ENCODE measurements at regions of chr17 and their contacts with region 1.

Region 1: DNA sequence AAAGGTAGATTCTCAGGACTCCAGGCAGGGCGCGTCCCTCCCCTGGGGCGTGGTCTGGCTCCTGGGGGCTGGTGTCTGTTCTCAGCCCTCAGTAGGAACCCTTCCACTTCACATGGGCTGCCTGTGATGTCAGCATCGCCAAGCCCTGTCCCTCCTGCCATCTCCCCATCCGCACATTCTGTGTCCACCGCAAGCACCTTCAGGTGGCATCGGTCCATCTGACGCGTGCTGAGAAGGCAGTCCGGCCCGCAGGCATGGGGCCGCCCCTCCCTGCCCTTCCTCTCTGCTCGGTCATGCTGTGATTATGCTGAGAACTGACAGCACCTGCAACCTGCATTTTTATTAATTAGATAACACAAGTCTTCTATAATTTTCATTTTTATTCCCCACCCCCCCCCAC is 12.7 kb upstream of the DNAH17 start:
- DNase-seq: no peak
- ATAC-seq: no peak
- H3K4me3 ChIP-seq: no peak overlapping the region
- H3K27ac ChIP-seq: peak overlapping the region in 2 of 10 donors; percentile 92 to 93
- H3K4me1 ChIP-seq: peaks cover 3 to 54% (median 23%) of the 10 kb centered on the region in 9 donors
- H3K27me3 ChIP-seq: peaks cover 0 to 8% (median 0%) of the 10 kb centered on the region in 7 donors
- CTCF ChIP-seq: no peak

Region 2: GRCh38 chr17:78563189-78564145 is 26.4 kb before region 1 on chr17:
- intact Hi-C with region 1: loop called in 1 of 10 experiments (anchors 1 kb)
- DNase-seq: peak; percentile 64 to 83
- ATAC-seq: peak in 7 of 8 donors; percentile 62 to 93 (median 89)
- H3K4me3 ChIP-seq: no peak overlapping the region
- H3K27ac ChIP-seq: peak overlapping the region in 9 of 10 donors; percentile 44 to 89 (median 75)
- H3K4me1 ChIP-seq: peaks cover 0 to 21% (median 11%) of the 10 kb centered on the region in 9 donors
- H3K27me3 ChIP-seq: peaks cover 0 to 6% (median 0%) of the 10 kb centered on the region in 7 donors
- CTCF ChIP-seq: no peak

Region 3: DNA sequence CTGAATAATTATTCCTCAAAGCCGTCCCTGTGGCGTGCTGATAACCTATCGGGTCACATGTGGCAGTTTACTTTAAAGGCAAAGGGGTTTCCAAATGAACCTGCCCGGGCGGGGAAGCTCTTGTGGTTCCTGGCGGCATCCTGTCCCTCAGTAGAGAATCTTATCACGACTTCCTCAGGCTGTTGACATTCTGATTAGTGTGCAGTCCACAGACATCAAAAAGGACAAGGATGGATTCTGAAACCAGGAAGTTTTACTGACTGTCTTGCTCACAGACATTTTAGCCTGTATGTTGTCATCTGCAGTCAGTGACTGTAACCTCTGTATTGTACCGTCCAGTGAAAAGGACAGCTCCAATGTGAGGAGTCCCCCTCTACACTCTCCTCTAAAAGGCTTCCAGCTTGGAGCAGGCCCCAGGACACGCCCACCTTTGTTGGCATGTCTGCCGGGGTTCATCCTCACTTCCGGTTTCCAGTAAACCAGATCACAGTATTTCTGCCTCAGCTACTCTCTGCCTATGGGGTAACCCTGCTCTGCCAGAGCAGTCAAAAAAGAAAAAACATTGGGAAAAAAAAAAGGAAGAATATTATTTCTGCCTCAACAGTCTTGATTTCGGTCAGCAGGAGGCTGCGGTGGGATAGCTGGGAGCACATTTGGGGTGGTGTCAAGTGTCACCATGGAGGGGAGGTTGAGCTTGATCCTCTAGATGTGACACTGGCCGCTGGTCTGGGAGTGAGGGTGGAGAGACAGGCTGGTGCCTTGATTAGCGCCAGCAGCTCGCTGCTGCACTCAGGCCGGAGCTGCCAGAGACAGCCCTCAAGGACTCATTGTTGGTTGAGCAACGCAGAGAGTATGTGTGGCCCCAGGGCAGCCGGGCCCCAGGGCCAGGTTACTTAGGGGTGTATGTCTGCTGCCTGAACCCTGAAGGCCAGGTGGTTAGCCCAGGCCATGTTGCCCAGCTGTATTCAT is 76.4 kb after region 1 on chr17:
- intact Hi-C with region 1: loop called in 1 of 10 experiments (anchors 5 kb)
- DNase-seq: peak in 1 of 2 donors; percentile 67
- ATAC-seq: peak; percentile 59 to 82 (median 78)
- H3K4me3 ChIP-seq: no peak overlapping the region
- H3K27ac ChIP-seq: peak overlapping the region; percentile 2 to 93 (median 66)
- H3K4me1 ChIP-seq: peaks cover 0 to 33% (median 18%) of the 10 kb centered on the region in 9 donors
- H3K27me3 ChIP-seq: no peaks in the 10 kb centered on the region
- CTCF ChIP-seq: no peak

Measured in heart right ventricle (tissue), 16 donors.